Posterior vena cava (tissue), 2 donors: ENCODE measurements at regions of chr22 and their contacts with region 1.

Region 1: GRCh38 chr22:19543970-19544708 is 19.9 kb upstream of the CLDN5 start:
- DNase-seq: peak; percentile 44

Region 2: DNA sequence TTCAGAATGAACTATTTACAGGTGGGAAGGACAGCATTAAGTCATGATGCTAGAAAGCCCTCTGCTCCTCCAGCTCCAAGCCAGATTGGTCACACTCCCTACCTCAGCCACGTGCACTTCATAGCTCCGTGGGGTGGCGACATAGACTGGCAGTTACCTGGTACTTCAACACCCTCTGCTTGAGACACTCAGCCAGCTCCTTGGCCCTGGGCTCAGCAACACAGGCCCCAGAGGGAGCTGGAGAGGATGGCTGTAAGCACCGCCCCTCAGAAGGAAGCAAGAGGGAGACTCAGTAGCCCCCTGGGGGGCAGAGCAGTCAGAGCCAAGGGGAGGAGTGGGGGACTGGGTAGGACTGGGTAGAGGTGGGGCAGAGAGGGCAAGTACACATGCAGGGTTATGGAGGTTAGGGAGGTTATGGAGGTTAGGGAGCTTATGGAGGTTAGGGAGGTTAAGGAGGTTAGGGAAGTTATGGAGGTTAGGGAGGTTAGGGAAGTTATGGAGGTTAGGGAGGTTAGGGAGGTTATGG is 1667.8 kb before region 1 on chr22:
- intact Hi-C with region 1: loop called in 1 of 2 experiments (anchors 5 kb)
- DNase-seq: no peak

Region 3: DNA sequence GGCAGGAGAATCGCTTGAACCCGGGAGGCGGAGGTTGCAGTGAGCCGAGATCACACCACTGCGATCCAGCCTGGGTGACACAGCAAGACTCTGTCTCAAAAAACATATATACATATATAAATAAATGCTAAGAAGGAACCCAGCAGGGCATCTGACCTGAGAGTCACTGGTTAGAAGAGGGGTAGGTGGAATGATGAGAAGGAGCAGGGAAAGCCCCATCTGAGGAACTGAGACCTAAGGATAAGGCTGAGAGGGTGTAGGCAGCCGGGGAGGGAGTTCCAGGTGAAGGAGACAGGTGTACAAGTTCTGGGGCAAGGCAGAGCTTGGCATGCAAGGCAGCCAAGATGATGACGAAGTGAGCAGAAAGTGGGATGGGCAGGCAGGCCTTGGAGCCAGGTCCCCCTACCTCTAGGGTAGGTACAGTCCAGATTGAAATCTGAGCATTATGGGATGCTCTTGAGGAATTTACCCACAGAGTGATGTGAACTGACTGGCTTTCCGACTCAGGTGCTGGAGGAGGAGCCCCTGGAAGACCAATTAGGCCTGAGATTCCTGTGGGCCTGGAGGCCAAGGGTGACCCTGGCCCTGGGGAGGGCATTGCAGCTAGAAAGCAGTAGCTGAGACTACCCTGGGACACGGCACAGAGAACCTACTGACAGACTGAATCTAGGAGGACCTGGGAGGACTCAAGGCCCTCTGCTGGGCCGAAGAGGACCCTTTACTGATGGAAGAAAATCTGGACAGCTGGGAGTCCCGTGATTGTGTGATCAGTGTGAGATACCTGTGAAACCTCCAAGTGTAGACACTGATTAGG is 928.7 kb after region 1 on chr22:
- intact Hi-C with region 1: loop called in 1 of 2 experiments (anchors 5 kb)
- DNase-seq: peak; percentile 40